Activated naive CD4-positive, alpha-beta T cell treated with anti-CD3 and anti-CD28 coated beads for 36 hours (primary cell): ENCODE measurements at regions of chr12 and their contacts with region 1.

Region 1: GRCh38 chr12:121793838-121794533 is 498 bp upstream of the RHOF start:
- DNase-seq: peak; percentile 97
- H3K4me3 Mint-ChIP-seq: peak overlapping the region; percentile 83
- H3K27ac Mint-ChIP-seq: peak overlapping the region; percentile 92
- H3K4me1 Mint-ChIP-seq: peaks cover 64% of the 10 kb centered on the region
- H3K27me3 Mint-ChIP-seq: no peaks in the 10 kb centered on the region

Region 2: DNA sequence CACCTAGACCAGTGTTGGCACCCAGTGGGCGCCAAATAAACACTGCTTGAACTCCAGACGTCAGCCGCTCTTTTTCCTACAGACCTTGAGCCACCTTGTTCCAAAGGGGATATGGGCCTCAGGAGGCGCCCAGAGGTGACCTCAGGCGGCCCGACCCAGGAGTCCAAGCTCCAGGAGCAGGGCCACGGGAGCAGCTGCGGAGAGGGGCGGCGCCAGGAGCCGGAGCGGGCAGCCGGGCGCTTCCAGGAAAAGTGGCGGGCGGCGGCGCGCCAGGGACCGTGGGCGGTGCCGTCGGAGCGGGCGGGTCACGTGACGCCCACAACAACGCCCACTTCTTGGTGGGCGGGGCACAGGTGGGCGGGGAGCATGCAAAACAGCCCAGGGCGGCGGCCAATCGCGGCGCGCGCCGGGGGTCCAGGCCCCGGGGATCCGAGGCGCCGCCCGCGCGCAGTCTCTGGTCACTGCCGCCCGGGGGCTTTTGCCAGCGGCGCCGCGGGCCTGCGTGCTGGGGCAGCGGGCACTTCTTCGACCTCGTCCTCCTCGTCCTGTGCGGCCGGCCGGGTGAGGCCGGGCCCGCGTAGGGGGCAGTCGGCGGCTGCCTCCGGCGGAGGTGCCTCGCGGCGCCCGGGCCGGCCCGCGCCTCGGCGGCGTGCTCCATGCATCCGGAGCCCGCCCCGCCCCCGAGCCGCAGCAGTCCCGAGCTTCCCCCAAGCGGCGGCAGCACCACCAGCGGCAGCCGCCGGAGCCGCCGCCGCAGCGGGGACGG is 167.7 kb before region 1 on chr12 and contains the start of gene ORAI1:
- CTCF ChIA-PET with region 1: interaction called, 6 read pairs
- intact Hi-C with region 1: loop called (anchors 2 kb)
- DNase-seq: peak; percentile 97
- H3K4me3 Mint-ChIP-seq: peak within 1 kb of the TSS; percentile 83
- H3K27ac Mint-ChIP-seq: peak within 1 kb of the TSS; percentile 98
- H3K4me1 Mint-ChIP-seq: peaks cover 37% of the 10 kb centered on the region
- H3K27me3 Mint-ChIP-seq: no peaks in the 10 kb centered on the region
- total RNA-seq, gene ORAI1: 21.1 to 21.8 TPM

Region 3: DNA sequence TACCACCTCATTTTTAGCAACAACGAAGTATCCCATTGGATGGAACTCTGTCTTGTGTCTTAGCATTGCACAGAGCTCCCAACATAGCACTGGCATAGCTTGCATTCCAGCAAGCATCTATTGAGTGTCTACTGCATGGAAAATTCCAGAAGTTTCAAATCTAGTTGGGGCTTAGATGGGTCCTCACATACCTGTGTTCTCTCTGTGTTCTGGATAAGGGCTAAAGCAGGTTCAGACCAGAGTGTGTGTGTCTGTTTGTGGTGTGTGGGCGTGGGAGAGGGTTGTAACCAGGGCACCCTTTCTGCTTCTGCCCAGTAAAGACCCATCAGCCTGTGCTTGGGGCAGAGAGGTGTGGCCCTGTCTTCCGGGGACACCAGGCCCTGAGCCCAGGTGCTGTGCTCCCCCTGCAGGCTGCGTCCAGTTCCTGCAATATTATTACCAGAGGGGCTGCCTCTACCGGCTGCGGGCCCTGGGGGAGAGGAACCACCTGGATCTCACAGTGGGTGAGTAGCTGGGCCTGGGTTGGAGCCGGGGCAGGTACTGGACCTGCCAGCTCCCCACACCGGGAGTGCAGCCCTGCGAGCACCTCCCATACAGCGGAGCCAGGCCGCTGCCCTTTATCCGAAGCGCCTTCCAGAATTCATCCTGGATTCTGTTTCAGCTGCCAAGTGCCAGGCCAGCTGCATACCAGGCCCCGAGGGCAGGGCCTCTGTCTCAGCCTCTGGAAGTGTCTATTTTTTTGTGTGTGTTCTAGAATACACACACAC is 20.8 kb before region 1 on chr12:
- CTCF ChIA-PET with region 1: interaction called, 381 read pairs
- intact Hi-C with region 1: loop called (anchors 1 kb)
- DNase-seq: peak; percentile 83
- H3K4me3 Mint-ChIP-seq: no peak overlapping the region
- H3K27ac Mint-ChIP-seq: peak overlapping the region; percentile 61
- H3K4me1 Mint-ChIP-seq: peaks cover 6% of the 10 kb centered on the region
- H3K27me3 Mint-ChIP-seq: no peaks in the 10 kb centered on the region

Region 4: DNA sequence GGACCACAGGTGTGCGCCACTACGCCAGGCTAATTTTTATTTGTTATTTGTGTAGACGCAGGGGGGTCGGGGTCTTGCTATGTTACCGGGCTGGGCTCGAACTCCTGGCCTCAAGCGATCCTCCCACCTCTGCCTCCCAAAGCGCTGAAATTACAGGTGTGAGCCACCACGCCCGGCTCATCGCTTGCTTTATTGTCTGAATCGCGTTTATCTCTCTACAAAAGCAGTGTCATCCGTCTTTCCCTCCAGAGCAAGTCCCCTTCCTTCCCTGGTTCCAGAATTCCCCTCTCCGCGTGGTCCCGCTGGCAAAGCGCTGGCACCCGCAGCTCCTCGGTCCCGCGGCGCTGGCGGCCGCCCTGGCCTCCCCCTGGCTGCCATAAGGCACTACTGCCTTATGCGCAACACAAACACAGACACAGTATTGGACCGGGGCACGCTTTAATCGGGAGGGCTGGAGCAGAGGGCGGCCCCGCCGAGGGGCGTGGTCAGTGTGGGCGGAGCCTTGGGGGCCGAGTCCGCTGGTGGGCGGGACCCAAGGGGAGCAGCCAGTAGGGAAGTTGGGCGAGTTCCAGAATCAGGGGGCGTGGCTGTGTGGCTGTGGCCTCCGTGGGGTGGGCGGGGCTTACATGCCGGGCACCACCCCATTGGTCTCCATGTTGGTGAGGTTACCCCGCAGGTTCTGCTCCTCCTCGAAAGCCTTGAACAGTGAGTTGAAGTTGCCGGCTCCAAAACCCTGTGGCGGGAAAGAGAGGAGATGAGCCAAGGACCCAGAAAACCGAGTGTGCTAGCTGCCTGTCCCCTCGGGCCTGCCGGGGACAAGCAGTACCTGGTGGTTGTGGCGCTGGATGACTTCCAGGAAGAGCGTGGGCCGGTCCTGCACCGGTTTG is 45.4 kb after region 1 on chr12:
- CTCF ChIA-PET with region 1: interaction called, 32 read pairs
- intact Hi-C with region 1: loop called (anchors 1 kb)
- DNase-seq: peak; percentile 100
- H3K4me3 Mint-ChIP-seq: peak overlapping the region; percentile 97
- H3K27ac Mint-ChIP-seq: peak overlapping the region; percentile 88
- H3K4me1 Mint-ChIP-seq: peaks cover 11% of the 10 kb centered on the region
- H3K27me3 Mint-ChIP-seq: no peaks in the 10 kb centered on the region

Region 5: DNA sequence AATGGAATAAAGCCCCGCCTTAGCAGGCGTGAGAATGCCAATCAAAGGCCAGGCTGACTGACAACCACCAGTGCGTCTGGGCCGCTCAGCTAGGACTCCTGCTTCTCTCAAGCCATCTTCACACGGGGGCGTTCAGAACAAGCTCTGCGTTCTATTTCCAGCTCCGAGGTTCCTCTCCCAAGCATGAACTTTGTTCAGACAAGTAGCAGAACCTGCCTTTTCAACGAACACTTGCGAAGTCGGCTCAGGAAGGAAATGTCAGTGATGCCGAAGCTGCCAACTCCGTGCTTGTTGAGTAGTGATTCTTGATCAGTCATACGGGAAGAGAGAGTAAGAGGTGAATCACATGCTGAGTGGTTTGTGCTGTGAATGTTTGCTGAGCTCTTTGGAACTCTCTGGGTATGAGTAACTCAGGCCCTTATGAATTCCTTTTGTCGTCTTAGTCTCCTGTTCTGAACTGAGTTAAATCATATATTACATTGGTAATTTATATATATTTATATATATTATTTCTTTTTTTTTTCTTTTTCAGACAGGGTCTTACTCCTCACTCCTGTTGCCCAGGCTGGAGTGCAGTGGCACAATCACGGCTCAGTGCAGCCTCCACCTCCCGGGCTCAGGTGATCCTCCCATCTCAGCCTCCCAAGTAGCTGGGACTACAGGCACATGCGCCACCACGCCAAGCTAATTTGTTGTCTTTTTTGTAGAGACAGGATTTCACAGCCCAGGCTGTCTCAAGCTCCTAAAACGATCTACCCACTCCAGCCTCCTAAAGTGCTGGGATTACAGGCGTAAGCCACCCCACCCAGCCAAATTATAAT is 198.3 kb after region 1 on chr12:
- CTCF ChIA-PET with region 1: no interaction called
- intact Hi-C with region 1: loop called (anchors 5 kb)
- DNase-seq: peak; percentile 89
- H3K4me3 Mint-ChIP-seq: peak overlapping the region; percentile 43
- H3K27ac Mint-ChIP-seq: peak overlapping the region; percentile 87
- H3K4me1 Mint-ChIP-seq: peaks cover 20% of the 10 kb centered on the region
- H3K27me3 Mint-ChIP-seq: no peaks in the 10 kb centered on the region

Region 6: DNA sequence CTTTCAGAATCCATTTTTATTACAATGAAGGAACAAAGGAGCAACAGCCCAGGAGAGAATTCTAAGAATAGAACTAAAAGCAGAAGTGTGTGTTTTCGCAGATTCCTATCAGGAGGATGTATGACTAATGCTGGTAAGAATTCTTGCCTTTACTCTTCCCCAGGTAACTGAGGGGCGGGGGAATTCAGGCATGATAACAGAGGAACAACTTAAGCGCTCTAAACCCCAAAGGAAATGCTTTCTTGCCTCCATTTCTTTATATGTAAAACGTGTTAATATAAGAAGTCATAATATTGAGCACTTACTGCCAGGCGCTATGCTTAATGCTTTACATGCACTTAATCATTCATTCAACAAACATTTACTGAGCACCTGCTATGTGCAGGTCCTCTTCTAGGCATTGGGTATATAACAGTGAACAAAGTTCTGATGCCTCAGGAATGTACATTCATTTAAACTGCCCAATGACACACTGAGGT is 932.1 kb after region 1 on chr12:
- CTCF ChIA-PET with region 1: no interaction called
- intact Hi-C with region 1: loop called (anchors 10 kb)
- DNase-seq: peak; percentile 61
- H3K4me3 Mint-ChIP-seq: peak overlapping the region; percentile 50
- H3K27ac Mint-ChIP-seq: peak overlapping the region; percentile 85
- H3K4me1 Mint-ChIP-seq: peaks cover 76% of the 10 kb centered on the region
- H3K27me3 Mint-ChIP-seq: no peaks in the 10 kb centered on the region